Gastrocnemius medialis (tissue), 4 donors: ENCODE measurements at regions of chrX and their contacts with region 1.

Region 1: GRCh38 chrX:13473442-13474163 is 95.8 kb upstream of the EGFL6 start:
- DNase-seq: no peak
- ATAC-seq: peak; percentile 24 to 78
- H3K4me3 ChIP-seq: peak overlapping the region in 1 of 4 donors; percentile 9
- H3K27ac ChIP-seq: peak overlapping the region; percentile 43 to 68 (median 62)
- H3K4me1 ChIP-seq: peaks cover 0 to 8% of the 10 kb centered on the region in 2 donors
- H3K27me3 ChIP-seq: no peaks in the 10 kb centered on the region
- CTCF ChIP-seq: no peak
- POLR2A ChIP-seq: no peak

Region 2: DNA sequence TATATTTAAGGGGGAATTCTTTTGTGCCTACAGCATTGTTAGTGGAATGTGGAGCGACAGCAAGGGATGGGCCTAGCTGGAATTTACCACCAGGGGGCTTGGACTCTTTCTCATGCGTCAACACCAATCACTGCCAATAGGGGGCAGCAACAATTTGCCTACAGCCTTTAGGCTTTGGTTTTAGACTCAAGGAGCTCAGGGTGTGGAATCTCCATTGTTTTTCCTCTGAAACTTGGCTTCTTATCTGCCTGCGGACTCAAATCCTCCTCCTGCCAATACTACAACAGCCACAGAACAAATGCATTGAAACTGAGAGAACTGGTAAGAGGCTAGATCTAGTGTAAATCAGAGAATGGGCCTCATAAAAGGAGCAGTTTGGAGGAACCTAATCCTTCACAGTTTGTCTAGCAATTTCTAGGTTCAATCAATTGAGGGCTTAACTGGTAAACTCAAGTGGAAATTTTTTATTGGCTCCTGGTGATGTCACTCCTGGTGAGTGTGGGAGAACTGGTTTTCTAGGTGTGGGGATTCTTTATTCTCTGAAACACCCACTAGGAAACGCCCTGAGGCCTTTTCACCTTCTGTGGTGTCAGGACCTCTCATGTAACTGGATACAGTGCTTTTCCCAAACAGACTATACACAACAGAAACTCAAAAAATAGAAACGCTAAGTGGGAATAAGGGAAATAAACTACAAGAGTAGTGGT is 526.6 kb before region 1 on chrX:
- in situ Hi-C with region 1: loop called in 3 of 4 experiments (anchors 25 kb)
- intact Hi-C with region 1: loop called (anchors 5 kb)
- DNase-seq: peak; percentile 16 to 23
- ATAC-seq: peak; percentile 36 to 39
- H3K4me3 ChIP-seq: no peak overlapping the region
- H3K27ac ChIP-seq: peak overlapping the region in 3 of 4 donors; percentile 19 to 50 (median 43)
- H3K4me1 ChIP-seq: peaks cover 0 to 3% of the 10 kb centered on the region in 2 donors
- H3K27me3 ChIP-seq: no peaks in the 10 kb centered on the region
- CTCF ChIP-seq: peak; percentile 64 to 78 (median 72)
- POLR2A ChIP-seq: no peak